ENCODE measurements at regions of chr9 and their contacts with region 1.

Region 1: DNA sequence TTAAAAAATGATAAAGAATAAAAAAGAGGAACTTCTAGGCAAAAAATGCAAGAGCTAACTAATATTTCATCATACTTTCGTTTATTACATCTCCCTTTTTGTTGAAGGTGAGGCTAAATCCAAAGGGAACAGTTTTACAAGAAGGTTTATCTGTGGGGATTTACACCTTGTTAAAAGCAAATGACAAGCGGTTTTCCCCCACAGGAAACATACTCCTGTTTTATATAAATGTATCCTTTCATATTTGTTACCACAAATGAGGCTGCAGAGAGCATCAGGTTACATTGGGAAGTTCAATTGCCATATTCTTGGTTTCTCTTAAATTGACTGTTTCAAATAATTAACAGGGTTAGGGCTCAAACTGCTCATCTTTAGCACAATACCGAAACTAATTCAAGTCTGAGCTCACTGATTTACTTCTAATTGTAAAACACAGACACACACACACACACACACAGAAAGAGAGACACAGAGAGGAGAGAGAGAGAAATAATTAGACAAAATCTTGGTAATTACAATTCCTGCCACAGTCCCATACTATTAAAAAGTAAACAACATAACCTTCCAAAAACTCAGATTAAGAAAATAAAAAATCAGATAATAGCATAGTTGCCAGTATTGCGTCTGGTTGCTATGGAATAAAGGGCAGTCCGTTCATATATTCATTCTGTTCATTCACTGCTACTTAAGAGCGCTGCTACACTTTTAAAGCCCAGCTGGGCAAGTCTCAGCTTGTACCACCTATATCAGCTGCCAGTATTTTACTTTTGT is 17.1 kb downstream of the RFX3 start:
- DNase-seq: peak; percentile 51
- H3K4me3 ChIP-seq: peak overlapping the region; percentile 63
- H3K27ac ChIP-seq: peak overlapping the region; percentile 82
- H3K4me1 ChIP-seq: peaks cover 51% of the 10 kb centered on the region
- CTCF ChIP-seq: no peak

Region 2: GRCh38 chr9:3478549-3478953 is 30.2 kb before region 1 on chr9:
- CTCF ChIA-PET with region 1: no interaction called
- POLR2A ChIA-PET with region 1: interaction called, 8 read pairs
- intact Hi-C with region 1: loop called (anchors 2 kb)
- DNase-seq: peak; percentile 80
- H3K4me3 ChIP-seq: peak overlapping the region; percentile 42
- H3K27ac ChIP-seq: peak overlapping the region; percentile 78
- H3K4me1 ChIP-seq: peaks cover 62% of the 10 kb centered on the region
- CTCF ChIP-seq: no peak